ENCODE measurements at regions of chr14 and their contacts with region 1.

Region 1: DNA sequence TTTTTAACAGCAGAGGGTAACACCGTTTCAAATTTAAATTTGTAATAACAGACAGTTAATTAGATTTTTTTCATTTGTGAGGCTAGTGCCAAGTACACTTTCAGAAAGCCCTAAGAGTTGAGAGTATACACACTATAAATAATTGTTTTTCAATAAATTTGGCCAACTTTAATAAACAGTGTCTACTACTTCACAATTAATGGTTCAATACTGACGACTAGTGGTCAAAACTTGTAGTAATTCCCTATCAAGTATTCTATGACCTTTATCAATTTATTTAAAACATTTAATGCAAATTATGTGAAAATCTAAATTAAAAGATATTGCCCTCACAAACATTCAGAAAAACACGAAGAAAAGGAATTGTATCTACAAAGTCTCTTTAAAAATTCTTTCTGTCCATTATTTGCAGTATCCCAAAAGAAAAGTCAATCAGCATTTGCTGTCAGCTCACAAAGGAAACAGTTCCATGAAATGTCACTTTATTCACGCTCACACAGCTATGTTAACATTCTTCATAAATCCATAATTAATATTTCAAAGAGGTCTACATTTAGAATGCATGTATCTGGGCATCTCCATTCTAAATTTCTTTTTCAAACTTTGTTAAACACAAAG is 91.2 kb downstream of the CEP128 start:
- DNase-seq: peak; percentile 20
- H3K4me3 ChIP-seq: no peak overlapping the region
- H3K27ac ChIP-seq: no peak overlapping the region
- H3K27me3 ChIP-seq: no peaks in the 10 kb centered on the region
- CTCF ChIP-seq: peak; percentile 55

Region 2: GRCh38 chr14:78959674-78960264 is 1890.5 kb before region 1 on chr14:
- CTCF ChIA-PET with region 1: interaction called, 14 read pairs
- POLR2A ChIA-PET with region 1: no interaction called
- DNase-seq: peak; percentile 51
- H3K4me3 ChIP-seq: no peak overlapping the region
- H3K27ac ChIP-seq: no peak overlapping the region
- H3K27me3 ChIP-seq: no peaks in the 10 kb centered on the region
- CTCF ChIP-seq: peak; percentile 93

Region 3: GRCh38 chr14:80213599-80213998 is 636.7 kb before region 1 on chr14:
- CTCF ChIA-PET with region 1: interaction called, 10 read pairs
- POLR2A ChIA-PET with region 1: no interaction called
- DNase-seq: no peak
- H3K4me3 ChIP-seq: no peak overlapping the region
- H3K27ac ChIP-seq: no peak overlapping the region
- H3K27me3 ChIP-seq: no peaks in the 10 kb centered on the region
- CTCF ChIP-seq: peak; percentile 54

Region 4: DNA sequence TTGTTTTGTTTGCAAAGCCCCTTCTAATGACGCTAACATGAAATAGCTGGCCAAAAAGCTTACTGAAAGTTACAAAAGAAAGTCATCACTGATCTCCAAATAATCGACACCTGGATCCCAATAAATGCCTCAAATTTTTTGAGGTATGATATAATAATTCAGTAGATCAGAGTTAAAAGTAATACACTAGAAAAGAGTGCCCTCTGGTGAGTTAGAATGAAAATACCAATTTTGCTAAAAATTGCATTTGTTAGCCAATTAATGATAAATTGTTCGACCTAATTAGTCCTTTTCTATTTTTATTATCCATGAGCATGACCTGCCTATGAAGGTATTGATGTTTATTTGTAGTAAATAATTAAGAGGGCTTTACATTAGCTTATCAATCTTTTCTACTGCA is 12.7 kb after region 1 on chr14:
- CTCF ChIA-PET with region 1: interaction called, 11 read pairs
- POLR2A ChIA-PET with region 1: no interaction called
- DNase-seq: no peak
- H3K4me3 ChIP-seq: no peak overlapping the region
- H3K27ac ChIP-seq: no peak overlapping the region
- H3K27me3 ChIP-seq: no peaks in the 10 kb centered on the region
- CTCF ChIP-seq: peak; percentile 46